HepG2 (cell line): ENCODE measurements at regions of chr7 and their contacts with region 1.

Region 1: DNA sequence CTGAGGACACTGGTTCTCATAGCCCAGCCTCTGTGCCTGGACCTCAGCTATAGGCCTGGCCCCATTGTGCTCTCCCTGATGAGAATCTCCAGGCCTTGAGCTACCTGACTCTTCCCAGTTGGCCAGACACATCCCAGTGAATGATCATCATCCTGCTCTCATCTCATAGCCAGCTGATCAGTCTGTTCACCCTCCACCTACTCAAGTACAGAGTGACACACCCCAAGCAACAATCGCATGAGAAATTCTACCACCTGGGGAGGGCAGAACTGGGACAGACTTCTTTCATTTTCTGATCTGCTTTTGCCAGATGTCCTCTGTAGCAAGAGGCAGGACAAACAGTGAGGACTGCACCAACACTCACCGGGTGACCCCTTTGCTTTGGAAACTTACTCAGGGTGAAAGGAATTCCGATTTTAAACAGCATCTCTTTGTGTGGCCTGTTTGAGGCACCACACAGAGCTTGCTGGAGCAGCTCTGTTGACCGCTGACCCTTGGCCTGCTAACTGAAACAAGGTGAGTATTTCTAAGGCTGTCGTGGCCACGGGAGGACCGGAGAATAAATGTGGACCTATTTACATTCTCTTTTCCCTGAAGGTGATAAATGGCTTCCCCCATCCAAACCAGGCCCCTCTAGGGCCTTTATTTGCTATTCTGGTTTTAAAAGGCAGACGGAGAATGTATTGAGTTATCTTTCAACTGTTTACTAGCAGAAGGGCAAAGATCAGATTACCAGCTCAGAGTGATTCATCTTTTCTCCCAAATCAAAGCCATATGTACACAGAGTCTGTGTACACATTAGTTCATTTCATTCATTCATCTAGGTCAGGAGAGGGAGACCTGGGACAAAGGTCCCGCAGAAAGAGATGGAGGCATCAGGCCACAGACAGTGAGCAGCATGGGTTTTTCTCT is 181.4 kb upstream of the TNS3 start:
- DNase-seq: peak; percentile 100
- ATAC-seq: peak; percentile 93
- H3K4me3 ChIP-seq: peak overlapping the region; percentile 7 to 57 (median 40); a peak in 4 of 6 replicates
- H3K27ac ChIP-seq: peak overlapping the region; percentile 98
- H3K4me1 ChIP-seq: peaks cover 68% of the 10 kb centered on the region
- H3K27me3 ChIP-seq: no peaks in the 10 kb centered on the region
- CTCF ChIP-seq: peak; percentile 21; the same call in 1 of the 2 replicates
- EP300 ChIP-seq: peak; percentile 96 to 98
- POLR2A ChIP-seq: peak in 1 of 2 experiments; percentile 59; a peak in 2 of 4 replicates
- RAD21 ChIP-seq: 0 out of 2 replicates have a peak, but pooled peaks have one; percentile 48

Region 2: GRCh38 chr7:47142169-47142866 is 621.0 kb before region 1 on chr7:
- CTCF ChIA-PET with region 1: no interaction called
- POLR2A ChIA-PET with region 1: no interaction called
- in situ Hi-C with region 1: no loop called
- intact Hi-C with region 1: no loop called
- DNase-seq: no peak
- ATAC-seq: no peak
- H3K4me3 ChIP-seq: no peak overlapping the region
- H3K27ac ChIP-seq: no peak overlapping the region
- H3K4me1 ChIP-seq: peaks cover 9% of the 10 kb centered on the region
- H3K27me3 ChIP-seq: 0 out of 5 replicates have a peak, but pooled peaks cover 0 to 4% of the 10 kb centered on the region in 2 experiments
- CTCF ChIP-seq: no peak
- EP300 ChIP-seq: no peak
- POLR2A ChIP-seq: no peak
- RAD21 ChIP-seq: no peak

Region 3: DNA sequence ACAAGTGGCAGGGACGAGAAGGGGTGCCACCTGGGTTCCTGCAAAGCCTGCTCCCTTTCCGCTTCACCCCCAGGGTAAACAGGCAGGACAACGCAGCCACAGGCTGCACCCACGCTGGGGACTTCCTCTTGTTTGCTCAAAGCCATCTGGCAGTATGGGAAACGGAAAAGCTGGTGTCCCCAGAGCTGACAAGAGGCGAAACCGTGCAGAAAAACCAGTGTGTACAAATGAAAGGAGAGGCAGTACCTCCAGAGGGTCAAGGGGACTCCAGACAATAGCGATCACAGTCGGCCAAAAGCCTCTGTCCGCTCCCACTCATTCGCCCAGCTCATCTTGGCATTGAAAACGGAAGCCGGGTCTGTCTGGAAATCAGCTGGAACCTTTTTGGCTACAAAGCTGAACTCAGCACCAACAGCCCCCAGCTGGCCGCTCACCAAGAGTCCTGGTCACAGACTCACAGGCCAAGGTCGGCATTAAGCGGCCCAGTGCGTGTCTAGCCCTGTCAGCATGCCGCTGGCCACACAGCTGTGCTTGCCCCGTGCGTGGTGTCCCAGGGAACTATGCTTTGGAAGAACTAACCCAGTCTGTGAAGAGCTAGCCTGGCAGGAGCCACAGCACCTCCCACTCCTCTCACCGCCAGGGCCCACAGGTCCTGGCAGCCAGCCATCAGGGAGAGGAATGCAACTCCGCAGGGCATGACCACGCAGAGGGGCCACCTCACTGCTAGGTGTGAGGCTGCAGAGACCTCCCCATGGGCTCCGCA is 191.8 kb before region 1 on chr7:
- CTCF ChIA-PET with region 1: no interaction called
- POLR2A ChIA-PET with region 1: interaction called, 10 read pairs
- in situ Hi-C with region 1: no loop called
- intact Hi-C with region 1: loop called (anchors 1 kb)
- DNase-seq: peak; percentile 90
- ATAC-seq: peak; percentile 70
- H3K4me3 ChIP-seq: peak overlapping the region; percentile 5 to 65 (median 43); a peak in 4 of 6 replicates
- H3K27ac ChIP-seq: peak overlapping the region; percentile 80
- H3K4me1 ChIP-seq: peaks cover 81% of the 10 kb centered on the region
- H3K27me3 ChIP-seq: no peaks in the 10 kb centered on the region
- CTCF ChIP-seq: 0 out of 2 replicates have a peak, but pooled peaks have one; percentile 3
- EP300 ChIP-seq: peak in 1 of 2 experiments; percentile 50; a peak in 2 of 4 replicates
- POLR2A ChIP-seq: peak; percentile 43 to 45
- RAD21 ChIP-seq: peak; percentile 30; the same call in 1 of the 2 replicates

Region 4: GRCh38 chr7:47600199-47601118 is 162.9 kb before region 1 on chr7:
- CTCF ChIA-PET with region 1: no interaction called
- POLR2A ChIA-PET with region 1: interaction called, 15 read pairs
- in situ Hi-C with region 1: no loop called
- intact Hi-C with region 1: loop called (anchors 1 kb)
- DNase-seq: no peak
- ATAC-seq: no peak
- H3K4me3 ChIP-seq: no peak overlapping the region
- H3K27ac ChIP-seq: no peak overlapping the region
- H3K4me1 ChIP-seq: peaks cover 72% of the 10 kb centered on the region
- H3K27me3 ChIP-seq: no peaks in the 10 kb centered on the region
- CTCF ChIP-seq: no peak
- EP300 ChIP-seq: no peak
- POLR2A ChIP-seq: no peak
- RAD21 ChIP-seq: no peak

Region 5: DNA sequence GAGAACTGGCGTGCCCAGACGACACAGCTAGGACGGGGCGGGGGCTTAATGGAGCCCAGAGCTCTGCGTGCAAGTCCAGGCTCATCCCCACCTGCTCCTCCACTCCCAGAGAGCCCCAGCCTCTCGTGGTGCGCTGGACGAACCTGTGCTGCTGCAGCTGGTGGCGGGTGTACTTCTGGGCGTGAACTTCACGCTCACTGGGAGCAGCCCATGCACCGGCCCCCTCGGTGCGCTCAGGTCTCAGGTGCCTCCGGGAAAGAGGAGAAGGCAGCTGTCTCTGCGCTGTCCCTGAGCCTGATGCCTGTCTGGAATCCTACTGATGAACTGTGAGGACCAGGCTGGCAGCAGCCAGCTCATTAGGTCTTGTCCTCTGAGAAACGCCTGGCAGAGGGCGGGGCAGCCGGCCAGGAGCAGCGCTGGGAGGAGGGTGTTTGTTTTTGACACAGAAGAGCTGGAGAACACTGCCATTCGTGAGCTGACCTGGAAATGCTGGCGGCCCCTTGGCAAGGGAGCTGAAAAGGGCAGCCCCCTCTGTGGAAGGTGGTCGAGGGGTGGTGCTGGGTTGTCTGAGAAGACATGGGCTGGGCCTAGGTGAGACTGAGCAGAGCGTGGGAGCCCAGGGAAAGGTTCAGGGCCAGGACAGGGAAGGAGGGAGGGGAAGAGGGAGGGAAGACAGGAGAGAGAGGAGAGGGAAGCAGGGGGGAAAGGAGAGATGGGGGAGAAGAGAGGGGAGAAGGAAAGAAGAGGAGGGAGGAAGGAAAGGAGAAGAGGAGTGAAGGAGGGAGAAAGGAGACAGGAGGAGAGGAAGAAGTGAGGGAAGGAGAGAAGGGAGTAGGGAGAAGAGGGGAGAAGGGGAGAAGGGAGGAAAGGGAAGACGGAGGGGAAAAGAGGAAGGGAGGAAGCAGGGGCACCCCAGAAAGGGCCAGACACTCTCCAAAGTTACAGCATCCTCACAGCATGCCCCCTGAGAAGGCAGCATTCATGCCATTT is 127.9 kb before region 1 on chr7:
- CTCF ChIA-PET with region 1: no interaction called
- POLR2A ChIA-PET with region 1: interaction called, 12 read pairs
- in situ Hi-C with region 1: no loop called
- intact Hi-C with region 1: loop called (anchors 2 kb)
- DNase-seq: peak; percentile 57
- ATAC-seq: peak; percentile 84
- H3K4me3 ChIP-seq: peak overlapping the region; percentile 52 to 74 (median 57)
- H3K27ac ChIP-seq: peak overlapping the region; percentile 7
- H3K4me1 ChIP-seq: peaks cover 66% of the 10 kb centered on the region
- H3K27me3 ChIP-seq: no peaks in the 10 kb centered on the region
- CTCF ChIP-seq: peak; percentile 16
- EP300 ChIP-seq: no peak
- POLR2A ChIP-seq: peak in 1 of 2 experiments; percentile 55; a peak in 2 of 4 replicates
- RAD21 ChIP-seq: 0 out of 2 replicates have a peak, but pooled peaks have one; percentile 39

Region 6: GRCh38 chr7:47730142-47730541 is 33.2 kb before region 1 on chr7:
- CTCF ChIA-PET with region 1: no interaction called
- POLR2A ChIA-PET with region 1: interaction called, 70 read pairs
- in situ Hi-C with region 1: no loop called
- intact Hi-C with region 1: loop called (anchors 1 kb)
- DNase-seq: no peak
- ATAC-seq: no peak
- H3K4me3 ChIP-seq: no peak overlapping the region
- H3K27ac ChIP-seq: no peak overlapping the region
- H3K4me1 ChIP-seq: peaks cover 60% of the 10 kb centered on the region
- H3K27me3 ChIP-seq: no peaks in the 10 kb centered on the region
- CTCF ChIP-seq: no peak
- EP300 ChIP-seq: no peak
- POLR2A ChIP-seq: no peak
- RAD21 ChIP-seq: no peak

Region 7: DNA sequence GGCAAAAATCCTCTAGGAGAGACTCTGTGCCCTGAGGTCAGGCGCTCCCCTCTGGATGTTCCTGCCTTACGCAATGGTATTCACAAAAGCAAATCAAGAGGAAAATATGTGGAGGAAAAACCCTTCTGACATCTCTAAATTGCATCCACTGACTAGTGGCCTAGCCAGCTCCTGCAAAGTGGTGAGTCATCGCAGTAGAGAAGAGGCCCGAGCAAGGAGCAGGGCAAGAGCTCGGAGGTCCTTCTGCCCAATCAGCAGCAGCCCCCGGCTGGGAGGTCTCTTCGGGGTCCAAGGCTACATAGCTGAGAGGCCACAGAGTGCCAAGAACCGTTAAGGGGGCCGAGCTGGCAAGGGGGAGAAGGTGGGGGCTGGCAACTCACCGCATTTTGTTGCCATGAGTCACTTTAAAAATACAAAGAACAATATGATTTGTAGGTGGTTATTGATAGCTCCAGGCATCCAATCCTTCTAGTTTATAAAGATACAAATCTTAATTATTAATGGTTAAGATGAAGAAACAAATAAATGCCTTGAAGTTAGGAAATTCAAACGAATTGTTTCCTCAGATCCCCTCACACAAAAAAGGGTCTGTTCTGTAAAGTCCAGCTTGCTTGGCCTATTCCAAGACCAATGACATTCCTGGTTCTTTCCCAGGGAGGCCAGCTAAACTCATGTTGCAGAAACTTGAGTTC is 23.4 kb after region 1 on chr7:
- CTCF ChIA-PET with region 1: interaction called, 3 read pairs
- POLR2A ChIA-PET with region 1: interaction called, 167 read pairs
- in situ Hi-C with region 1: no loop called
- intact Hi-C with region 1: loop called (anchors 1 kb)
- DNase-seq: peak; percentile 97
- ATAC-seq: peak; percentile 95
- H3K4me3 ChIP-seq: peak overlapping the region in 2 of 3 experiments; percentile 27 to 28; a peak in 4 of 6 replicates
- H3K27ac ChIP-seq: peak overlapping the region; percentile 92
- H3K4me1 ChIP-seq: peaks cover 68% of the 10 kb centered on the region
- H3K27me3 ChIP-seq: no peaks in the 10 kb centered on the region
- CTCF ChIP-seq: no peak
- EP300 ChIP-seq: peak; percentile 16 to 87; a peak in 3 of 4 replicates
- POLR2A ChIP-seq: peak in 1 of 2 experiments; percentile 49; a peak in 2 of 4 replicates
- RAD21 ChIP-seq: peak; percentile 43; the same call in 1 of the 2 replicates

Region 8: DNA sequence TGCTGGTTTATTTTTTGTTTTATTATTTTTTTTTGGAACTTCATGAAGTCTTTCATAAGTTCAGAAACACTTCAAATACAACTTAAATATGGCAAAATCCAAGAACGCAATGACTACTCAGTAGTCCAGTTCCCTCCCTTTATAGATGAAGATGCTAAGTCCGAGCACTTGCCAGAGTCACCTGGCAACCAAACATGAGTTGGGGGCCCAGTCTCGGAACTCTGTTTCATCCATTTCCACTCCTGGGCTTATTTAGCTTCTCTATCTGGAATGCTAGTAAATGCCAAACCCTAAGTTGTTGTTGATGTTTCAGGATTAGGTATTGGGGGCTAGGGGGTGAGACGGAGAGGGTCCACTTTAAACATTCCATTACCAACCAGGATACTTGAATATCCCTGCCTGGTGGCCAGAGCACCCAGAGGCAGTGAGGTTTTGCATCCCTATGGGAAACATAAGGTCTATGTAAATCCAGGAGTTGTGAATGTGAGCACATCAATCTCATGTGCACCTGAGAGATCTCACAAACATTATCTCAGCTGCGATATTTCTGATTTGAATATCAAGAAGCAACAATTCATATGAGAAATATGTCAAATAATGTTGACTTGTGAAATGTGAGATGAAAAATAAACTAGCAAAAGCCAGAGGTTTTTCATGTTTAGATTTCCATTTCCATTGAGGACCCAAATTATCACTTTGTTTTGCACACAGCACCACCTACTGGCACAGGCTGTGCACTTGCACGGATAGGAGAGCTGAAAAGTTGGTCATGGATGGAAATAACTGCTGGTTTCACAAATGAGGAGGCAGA is 55.7 kb after region 1 on chr7:
- CTCF ChIA-PET with region 1: interaction called, 4 read pairs
- POLR2A ChIA-PET with region 1: interaction called, 4 read pairs
- in situ Hi-C with region 1: no loop called
- intact Hi-C with region 1: loop called (anchors 1 kb)
- DNase-seq: peak; percentile 70
- ATAC-seq: peak; percentile 83
- H3K4me3 ChIP-seq: no peak overlapping the region
- H3K27ac ChIP-seq: no peak overlapping the region
- H3K4me1 ChIP-seq: peaks cover 20% of the 10 kb centered on the region
- H3K27me3 ChIP-seq: no peaks in the 10 kb centered on the region
- CTCF ChIP-seq: peak; percentile 91
- EP300 ChIP-seq: no peak
- POLR2A ChIP-seq: no peak
- RAD21 ChIP-seq: peak; percentile 90

Region 9: DNA sequence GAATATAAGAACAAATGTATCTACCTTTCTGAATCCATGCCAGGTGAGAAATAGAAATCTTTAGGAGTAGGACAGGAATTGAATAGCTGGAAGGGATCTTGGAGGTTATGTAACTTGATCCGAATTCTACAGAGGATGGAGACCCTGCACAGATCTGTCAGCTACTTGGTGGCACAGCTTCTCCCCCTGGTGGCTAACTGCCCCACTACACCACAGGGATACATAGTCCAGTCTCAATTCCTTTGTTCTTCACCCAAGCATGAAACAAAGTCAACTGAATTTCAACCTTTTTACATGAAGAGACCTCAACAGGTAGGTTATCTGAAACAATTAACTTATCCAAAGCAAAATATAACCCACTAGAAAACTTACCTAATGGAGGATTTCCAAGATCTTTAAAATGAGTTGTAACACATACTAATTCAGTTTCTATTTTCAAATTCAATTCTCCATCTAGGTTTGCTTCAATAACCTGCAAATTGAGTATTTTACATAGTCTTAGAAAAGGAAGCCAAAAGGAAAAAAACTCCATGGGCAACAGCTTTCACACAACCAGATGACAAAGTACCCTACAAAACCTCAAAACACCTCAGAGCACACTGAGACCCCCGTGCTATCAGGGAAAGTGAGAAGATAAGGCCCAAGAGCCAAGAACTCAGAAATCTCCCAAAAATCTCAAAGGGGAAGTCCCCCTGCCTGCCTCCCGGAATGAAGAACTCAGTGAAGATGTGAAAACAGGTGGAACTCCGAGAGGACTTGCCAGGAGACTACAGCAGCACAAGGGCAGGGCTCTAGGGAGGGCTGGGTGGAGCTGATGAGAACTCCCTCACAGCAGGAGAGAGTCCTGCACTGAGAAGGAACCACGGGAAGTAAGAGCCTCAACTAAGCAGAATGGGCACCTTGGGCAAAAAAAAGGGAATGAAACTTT is 205.8 kb after region 1 on chr7:
- CTCF ChIA-PET with region 1: no interaction called
- POLR2A ChIA-PET with region 1: no interaction called
- in situ Hi-C with region 1: no loop called
- intact Hi-C with region 1: no loop called
- DNase-seq: peak; percentile 53
- ATAC-seq: peak; percentile 96
- H3K4me3 ChIP-seq: no peak overlapping the region
- H3K27ac ChIP-seq: no peak overlapping the region
- H3K4me1 ChIP-seq: no peaks in the 10 kb centered on the region
- H3K27me3 ChIP-seq: no peaks in the 10 kb centered on the region
- CTCF ChIP-seq: peak; percentile 85
- EP300 ChIP-seq: no peak
- POLR2A ChIP-seq: no peak
- RAD21 ChIP-seq: peak; percentile 70

Region 10: DNA sequence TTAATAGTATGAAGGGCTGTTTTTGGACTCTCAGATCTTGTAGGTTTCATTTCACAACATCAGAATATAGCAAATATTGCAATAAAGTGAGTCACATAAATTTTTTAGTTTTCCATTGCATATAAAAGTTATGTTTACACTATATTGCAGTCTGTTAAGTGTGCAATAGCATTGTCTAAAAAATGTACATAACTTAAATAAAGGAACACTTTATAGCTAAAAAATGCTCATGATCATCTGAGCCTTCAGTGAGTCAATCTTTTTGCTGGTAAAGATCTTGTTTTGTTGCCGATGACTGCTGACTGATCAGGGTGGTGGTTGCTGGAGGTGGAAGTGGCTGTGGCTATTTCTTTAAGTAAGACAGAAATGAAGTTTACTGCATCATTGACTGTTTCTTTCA is 449.9 kb after region 1 on chr7:
- CTCF ChIA-PET with region 1: no interaction called
- POLR2A ChIA-PET with region 1: no interaction called
- in situ Hi-C with region 1: no loop called
- intact Hi-C with region 1: no loop called
- DNase-seq: no peak
- ATAC-seq: no peak
- H3K4me3 ChIP-seq: no peak overlapping the region
- H3K27ac ChIP-seq: no peak overlapping the region
- H3K4me1 ChIP-seq: no peaks in the 10 kb centered on the region
- H3K27me3 ChIP-seq: no peaks in the 10 kb centered on the region
- CTCF ChIP-seq: no peak
- EP300 ChIP-seq: no peak
- POLR2A ChIP-seq: no peak
- RAD21 ChIP-seq: no peak